ENCODE measurements at regions of chr13 and their contacts with region 1.

Region 1: DNA sequence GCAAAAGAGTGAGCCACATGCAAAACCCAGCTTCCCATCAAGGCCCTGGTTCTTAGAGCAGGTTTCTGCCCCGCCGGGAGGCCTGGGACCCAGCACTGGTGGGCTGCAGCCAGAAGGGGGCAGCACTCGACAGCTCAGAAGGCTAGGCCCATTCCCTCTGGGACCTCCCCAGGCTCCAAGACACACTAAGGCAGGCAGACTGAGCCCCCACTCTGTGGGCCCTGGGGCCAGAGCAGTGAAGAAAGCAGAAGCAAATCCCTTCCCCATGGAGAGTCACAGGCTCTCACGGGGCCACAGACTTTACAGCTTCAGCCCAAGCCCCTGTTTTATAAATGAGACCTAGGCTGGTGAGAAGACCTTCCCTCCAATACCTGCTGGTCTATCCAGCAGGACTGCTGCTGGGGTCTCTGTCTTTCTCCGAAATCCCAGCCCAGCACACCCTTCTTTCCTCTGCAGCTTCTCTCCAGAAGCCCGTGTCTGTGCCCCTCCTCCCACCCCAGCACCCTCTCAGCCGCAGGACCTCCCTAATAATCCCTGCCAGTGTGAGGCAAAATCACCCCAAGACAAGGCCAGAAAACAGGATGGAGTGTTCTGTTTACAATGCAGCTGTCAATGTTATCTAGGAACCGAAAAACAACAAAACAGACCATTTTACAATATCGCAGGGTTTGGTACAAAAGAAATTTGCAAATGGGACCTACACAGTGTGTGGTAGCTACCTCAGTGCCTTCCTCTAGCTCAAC is 109.3 kb downstream of the ABCC4 start:
- DNase-seq: peak; percentile 81
- H3K4me3 ChIP-seq: no peak overlapping the region
- H3K27ac ChIP-seq: no peak overlapping the region
- H3K4me1 ChIP-seq: no peaks in the 10 kb centered on the region
- H3K27me3 ChIP-seq: no peaks in the 10 kb centered on the region

Region 2: DNA sequence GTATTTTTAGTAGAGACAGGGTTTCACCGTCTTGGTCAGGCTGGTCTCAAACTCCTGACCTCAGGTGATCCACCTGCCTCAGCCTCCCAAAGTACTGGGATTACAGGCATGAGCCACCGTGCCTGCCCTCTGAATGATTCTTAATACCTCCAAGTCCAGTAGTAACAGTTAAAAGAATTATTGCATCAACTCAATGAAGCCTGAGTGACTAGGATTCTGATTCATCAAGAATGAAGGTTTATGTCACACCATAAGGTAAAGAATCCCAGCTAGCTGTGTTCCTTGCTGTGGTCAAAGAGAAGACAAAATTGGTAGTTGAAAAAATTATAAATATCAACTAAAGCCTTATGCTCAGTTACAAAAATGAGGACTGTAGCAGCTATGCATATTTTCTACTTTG is 190.4 kb after region 1 on chr13:
- in situ Hi-C with region 1: loop called (anchors 5 kb)
- DNase-seq: no peak
- H3K4me3 ChIP-seq: no peak overlapping the region
- H3K27ac ChIP-seq: no peak overlapping the region
- H3K4me1 ChIP-seq: peaks cover 4% of the 10 kb centered on the region; the same call in 1 of the 2 replicates
- H3K27me3 ChIP-seq: peaks cover 13% of the 10 kb centered on the region; the same call in 1 of the 2 replicates